Heart left ventricle (tissue), 16 donors: ENCODE measurements at regions of chr16 and their contacts with region 1.

Region 1: DNA sequence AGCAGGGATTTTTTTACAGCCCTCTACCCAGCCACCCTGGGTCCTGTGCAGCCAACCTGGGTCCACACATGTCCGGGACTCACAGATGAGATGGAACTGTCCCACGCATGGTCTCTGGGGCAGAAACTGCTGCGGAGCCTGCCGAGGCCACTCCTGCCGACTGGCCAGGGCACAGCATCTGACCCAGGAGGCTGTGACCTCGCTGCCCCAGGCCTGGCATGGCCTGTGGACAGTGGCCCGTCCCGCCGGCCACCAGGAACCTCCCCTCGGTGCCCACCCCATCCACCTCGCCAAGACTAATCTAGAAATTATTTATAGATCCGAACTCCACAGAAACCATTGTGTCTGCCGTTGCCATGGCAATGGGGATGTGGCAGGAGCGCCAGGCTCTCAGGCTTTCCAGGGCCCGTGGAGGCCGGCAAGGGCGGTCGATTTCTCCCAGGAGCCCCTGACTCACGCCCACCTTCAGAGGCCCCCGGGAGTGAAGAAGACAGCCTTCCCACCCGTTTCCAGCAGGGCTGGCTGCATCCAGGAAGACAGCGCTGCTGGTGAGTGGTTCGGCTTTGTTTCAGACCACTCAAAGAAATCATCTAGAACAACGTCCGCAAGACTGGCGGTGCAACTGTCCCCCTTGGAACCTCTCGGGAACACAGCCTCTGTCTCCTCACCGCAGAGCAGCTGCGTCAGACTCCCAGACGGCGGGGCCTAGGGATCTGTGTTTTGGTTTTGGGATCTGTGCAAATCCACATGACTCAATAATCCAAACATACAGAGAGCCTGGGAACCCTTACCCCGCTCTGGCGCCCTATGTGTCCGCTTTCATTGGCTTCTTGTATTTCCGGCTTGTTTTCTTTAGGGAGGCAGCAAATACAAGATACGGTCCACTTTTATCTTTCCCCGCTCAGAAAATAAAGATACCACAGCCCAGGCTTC is 48.4 kb upstream of the ZCCHC14 start:
- DNase-seq: peak; percentile 44 to 80 (median 70)
- ATAC-seq: peak; percentile 47 to 79 (median 65)
- H3K4me3 ChIP-seq: peak overlapping the region in 8 of 12 donors; percentile 11 to 48 (median 25)
- H3K27ac ChIP-seq: peak overlapping the region; percentile 34 to 69 (median 56)
- H3K4me1 ChIP-seq: peaks cover 0 to 26% (median 11%) of the 10 kb centered on the region in 12 donors
- H3K27me3 ChIP-seq: peaks cover 0 to 7% (median 0%) of the 10 kb centered on the region in 9 donors
- CTCF ChIP-seq: no peak
- POLR2A ChIP-seq: no peak

Region 2: DNA sequence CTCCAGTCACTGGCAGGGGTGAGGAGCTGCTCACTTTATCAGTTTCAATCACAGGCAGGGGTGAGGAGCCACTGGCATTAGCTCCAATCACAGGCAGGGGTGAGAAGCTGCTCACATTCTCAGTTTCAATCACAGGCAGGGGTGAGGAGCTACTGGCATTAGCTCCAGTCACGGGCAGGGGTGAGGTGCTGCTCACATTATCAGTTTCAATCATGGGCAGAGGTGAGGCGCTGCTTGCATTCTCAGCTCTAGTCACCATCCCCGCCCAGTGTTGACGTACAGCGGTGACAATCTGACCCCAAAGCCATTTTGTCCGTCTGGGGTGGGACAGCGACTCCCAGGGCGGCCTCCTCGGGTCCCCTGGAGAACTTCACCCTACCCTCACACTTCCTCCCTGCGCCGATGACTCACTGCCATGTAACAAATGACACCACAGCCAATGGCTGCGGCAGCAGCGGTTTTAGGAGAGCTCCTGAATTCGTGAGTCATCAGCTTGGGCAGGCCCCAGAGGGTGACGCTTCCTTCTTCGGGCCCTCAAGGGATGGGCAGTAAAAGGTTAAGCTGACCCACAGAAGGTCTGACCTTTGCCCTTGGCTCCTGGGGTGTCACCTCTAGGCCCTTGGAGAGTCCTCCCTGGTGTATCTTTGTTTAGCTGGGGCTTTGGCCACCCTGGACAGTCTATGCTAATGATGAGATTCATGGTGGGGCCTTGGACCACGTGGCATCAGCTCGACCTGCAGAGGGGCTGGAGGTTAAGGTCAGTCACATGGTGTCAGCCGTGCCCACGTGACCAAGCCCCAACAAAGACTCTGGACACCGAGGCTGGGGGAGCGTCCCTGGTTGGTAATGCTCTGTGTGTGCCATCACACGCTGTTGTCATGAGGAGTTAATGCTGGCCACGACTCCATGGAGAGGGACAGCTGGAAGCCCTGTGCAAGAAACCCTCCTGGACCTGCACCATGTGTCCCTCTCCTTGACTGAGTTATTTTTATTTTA is 395.7 kb before region 1 on chr16:
- intact Hi-C with region 1: no loop called
- DNase-seq: no peak
- ATAC-seq: peak in 1 of 4 donors; percentile 21
- H3K4me3 ChIP-seq: no peak overlapping the region
- H3K27ac ChIP-seq: no peak overlapping the region
- H3K4me1 ChIP-seq: no peaks in the 10 kb centered on the region
- H3K27me3 ChIP-seq: peaks cover 0 to 3% (median 0%) of the 10 kb centered on the region in 9 donors
- CTCF ChIP-seq: no peak
- POLR2A ChIP-seq: no peak

Region 3: GRCh38 chr16:87410968-87411367 is 130.2 kb before region 1 on chr16:
- intact Hi-C with region 1: loop called in 6 of 10 experiments (anchors 5 to 10 kb)
- DNase-seq: no peak
- ATAC-seq: no peak
- H3K4me3 ChIP-seq: no peak overlapping the region
- H3K27ac ChIP-seq: no peak overlapping the region
- H3K4me1 ChIP-seq: peaks cover 0 to 21% (median 0%) of the 10 kb centered on the region in 12 donors
- H3K27me3 ChIP-seq: no peaks in the 10 kb centered on the region
- CTCF ChIP-seq: peak in 1 of 12 donors; percentile 3
- POLR2A ChIP-seq: no peak